Dendritic cell treated with granulocyte-macrophage colony-stimulating factor and Interleukin-4, amounts not matched to agents 40 ng/mL and 50 ng/mL, for 4 days (primary cell): ENCODE measurements at regions of chr10 and their contacts with region 1.

Region 1: GRCh38 chr10:79084012-79084971 is 15.5 kb downstream of the ZMIZ1 start:
- H3K4me3 Mint-ChIP-seq: peak overlapping the region; percentile 69
- H3K27ac Mint-ChIP-seq: peak overlapping the region; percentile 81
- H3K4me1 Mint-ChIP-seq: peaks cover 98% of the 10 kb centered on the region
- H3K27me3 Mint-ChIP-seq: no peaks in the 10 kb centered on the region

Region 2: GRCh38 chr10:79149662-79150443 is 65.6 kb after region 1 on chr10:
- intact Hi-C with region 1: loop called (anchors 5 kb)
- H3K4me3 Mint-ChIP-seq: peak overlapping the region; percentile 46
- H3K27ac Mint-ChIP-seq: peak overlapping the region; percentile 95
- H3K4me1 Mint-ChIP-seq: peaks cover 100% of the 10 kb centered on the region
- H3K27me3 Mint-ChIP-seq: no peaks in the 10 kb centered on the region

Region 3: GRCh38 chr10:79155301-79156081 is 71.2 kb after region 1 on chr10:
- intact Hi-C with region 1: loop called (anchors 5 kb)
- H3K4me3 Mint-ChIP-seq: no peak overlapping the region
- H3K27ac Mint-ChIP-seq: peak overlapping the region; percentile 95
- H3K4me1 Mint-ChIP-seq: peaks cover 95% of the 10 kb centered on the region
- H3K27me3 Mint-ChIP-seq: no peaks in the 10 kb centered on the region